Natural killer cell (primary cell): ENCODE measurements at regions of chr7 and their contacts with region 1.

Region 1: DNA sequence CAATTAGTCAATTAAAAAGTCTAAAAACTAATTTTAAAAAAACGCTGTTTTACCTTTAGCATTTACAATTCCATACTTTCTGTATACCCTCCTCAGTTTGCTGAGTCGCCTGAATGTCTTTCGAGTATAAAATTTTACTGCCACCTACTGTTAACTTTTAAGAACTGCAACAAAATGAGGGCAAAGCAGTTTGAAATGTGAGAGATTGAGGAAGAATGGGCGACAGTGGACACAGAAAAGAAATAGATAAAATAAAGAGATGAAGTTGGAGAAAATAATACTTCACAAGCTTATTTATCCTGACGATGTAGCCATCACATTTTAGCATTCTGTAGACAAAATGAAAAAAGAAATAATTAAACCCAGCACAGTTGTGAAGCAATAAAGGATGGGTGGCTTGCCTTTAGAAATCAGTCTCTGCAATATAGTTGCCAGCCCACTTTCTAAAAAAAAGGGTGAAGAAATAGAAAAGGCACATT is 110.8 kb upstream of the PTN start:
- DNase-seq: peak in 1 of 2 donors; percentile 23
- ATAC-seq: no peak
- H3K4me3 ChIP-seq: no peak overlapping the region
- H3K4me3 Mint-ChIP-seq: no peak overlapping the region
- H3K27ac ChIP-seq: no peak overlapping the region
- H3K27ac Mint-ChIP-seq: no peak overlapping the region
- H3K4me1 ChIP-seq: no peaks in the 10 kb centered on the region
- H3K4me1 Mint-ChIP-seq: no peaks in the 10 kb centered on the region
- H3K27me3 ChIP-seq: no peaks in the 10 kb centered on the region
- H3K27me3 Mint-ChIP-seq: peaks cover 0 to 3% of the 10 kb centered on the region in 2 donors
- CTCF ChIP-seq: peak; percentile 69

Region 2: GRCh38 chr7:135795846-135796570 is 1658.3 kb before region 1 on chr7:
- intact Hi-C with region 1: loop called (anchors 10 kb)
- DNase-seq: no peak
- ATAC-seq: no peak
- H3K4me3 ChIP-seq: no peak overlapping the region
- H3K4me3 Mint-ChIP-seq: no peak overlapping the region
- H3K27ac ChIP-seq: no peak overlapping the region
- H3K27ac Mint-ChIP-seq: no peak overlapping the region
- H3K4me1 ChIP-seq: peaks cover 3% of the 10 kb centered on the region
- H3K4me1 Mint-ChIP-seq: peaks cover 3 to 6% of the 10 kb centered on the region in 2 donors
- H3K27me3 ChIP-seq: peaks cover 9% of the 10 kb centered on the region
- H3K27me3 Mint-ChIP-seq: peaks cover 17 to 19% of the 10 kb centered on the region in 2 donors
- CTCF ChIP-seq: no peak